ENCODE measurements at regions of chr3 and their contacts with region 1.

Region 1: DNA sequence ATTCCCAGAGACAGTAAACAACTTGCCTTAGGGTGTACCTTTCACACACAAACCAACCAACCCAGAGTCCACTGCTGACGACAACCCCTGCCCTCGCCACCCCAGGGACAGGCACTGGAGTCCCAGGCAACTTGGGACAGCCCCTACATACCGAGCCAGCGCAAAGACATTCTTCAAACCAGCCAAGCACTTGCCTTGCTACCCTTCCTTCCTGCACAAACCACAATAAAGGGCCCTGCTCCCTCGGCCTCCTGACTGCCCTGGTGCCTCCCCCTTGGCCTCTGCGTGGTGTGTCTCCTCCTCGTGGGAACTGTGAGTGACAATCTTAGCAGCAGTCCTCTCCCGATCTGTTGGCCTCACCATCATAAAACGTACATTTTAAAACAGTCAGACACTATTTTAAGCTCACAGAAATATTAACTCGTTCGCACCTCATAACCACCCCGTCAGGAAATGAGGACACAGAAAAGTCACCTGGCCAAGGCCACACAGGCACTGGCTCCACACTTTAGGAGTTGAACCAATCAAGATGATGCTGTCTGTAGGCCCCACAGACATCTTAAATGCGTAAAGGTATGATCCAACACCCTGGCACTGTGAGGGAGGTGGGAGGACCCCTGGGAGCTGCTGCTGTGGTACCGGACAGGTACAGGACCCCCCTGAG is 113.8 kb downstream of the ADCY5 start:
- DNase-seq: no peak
- H3K4me3 ChIP-seq: no peak overlapping the region
- H3K27ac ChIP-seq: peak overlapping the region in 1 of 2 donors; percentile 10
- H3K4me1 ChIP-seq: peaks cover 0 to 2% of the 10 kb centered on the region in 2 donors
- H3K27me3 ChIP-seq: no peaks in the 10 kb centered on the region
- CTCF ChIP-seq: no peak
- POLR2A ChIP-seq: no peak

Region 2: DNA sequence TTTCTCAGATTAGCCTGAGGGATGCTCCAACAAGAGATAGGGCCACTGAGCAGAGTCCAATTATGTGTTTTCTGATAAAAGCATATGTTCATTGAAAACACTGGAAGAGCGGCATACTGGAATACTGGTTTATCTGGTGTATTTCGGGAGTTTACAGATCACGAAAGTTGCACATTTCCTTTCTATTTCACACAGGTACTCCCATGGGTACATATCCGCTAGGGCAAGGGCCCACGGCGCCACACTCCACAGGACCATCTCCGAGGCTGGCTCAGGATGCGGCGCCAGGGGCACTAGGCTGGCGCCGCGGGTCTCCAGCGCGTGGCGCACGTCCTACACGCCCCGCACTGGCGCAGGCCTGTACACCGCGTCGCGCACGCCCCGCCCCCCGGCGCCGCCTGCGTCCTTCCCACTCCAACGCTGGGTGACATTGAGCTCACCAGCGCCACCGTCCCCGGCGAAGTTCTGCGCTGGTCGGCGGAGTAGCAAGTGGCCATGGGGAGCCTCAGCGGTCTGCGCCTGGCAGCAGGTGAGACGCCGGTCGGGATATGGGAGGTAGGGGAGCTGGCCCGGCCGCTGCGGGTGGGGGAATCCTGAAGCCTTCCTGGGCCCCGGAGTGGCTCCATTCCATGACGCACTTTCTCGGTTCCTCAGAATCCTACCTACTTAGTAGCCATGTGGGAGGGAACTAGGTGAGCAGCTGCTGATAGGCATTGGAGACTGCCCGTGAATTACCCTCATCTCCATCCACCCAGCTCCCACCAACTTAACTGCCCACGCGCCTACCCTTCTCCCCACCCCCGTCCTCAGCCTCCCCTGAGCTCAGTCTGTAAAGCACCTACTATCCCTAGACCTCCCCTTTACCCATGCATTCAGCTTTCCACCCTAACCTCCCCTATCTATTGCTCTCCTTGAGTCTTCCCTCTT is 951.1 kb before region 1 on chr3 and contains the start of gene FAM162A:
- intact Hi-C with region 1: no loop called
- DNase-seq: peak; percentile 86 to 90
- H3K4me3 ChIP-seq: peak within 1 kb of the TSS; percentile 75 to 88 (median 87)
- H3K27ac ChIP-seq: peak within 1 kb of the TSS; percentile 89 to 93
- H3K4me1 ChIP-seq: no peaks in the 10 kb centered on the region
- H3K27me3 ChIP-seq: no peaks in the 10 kb centered on the region
- CTCF ChIP-seq: peak; percentile 38 to 55 (median 42)
- POLR2A ChIP-seq: peak; percentile 72
- total RNA-seq, gene FAM162A: 19.3 to 27.2 (median 26.5) TPM

Region 3: GRCh38 chr3:123489400-123490004 is 154.4 kb after region 1 on chr3:
- intact Hi-C with region 1: loop called (anchors 10 kb)
- DNase-seq: peak; percentile 68 to 70
- H3K4me3 ChIP-seq: no peak overlapping the region
- H3K27ac ChIP-seq: no peak overlapping the region
- H3K4me1 ChIP-seq: no peaks in the 10 kb centered on the region
- H3K27me3 ChIP-seq: no peaks in the 10 kb centered on the region
- CTCF ChIP-seq: peak; percentile 69 to 86 (median 85)
- POLR2A ChIP-seq: no peak

Measured in breast epithelium (tissue), 4 donors.